Endothelial cell of umbilical vein (primary cell): ENCODE measurements at regions of chr1 and their contacts with region 1.

Region 1: GRCh38 chr1:47725992-47726855 is 271.0 kb downstream of the TRABD2B start:
- DNase-seq: peak; percentile 74
- H3K4me3 ChIP-seq: no peak overlapping the region
- H3K27ac ChIP-seq: no peak overlapping the region
- H3K4me1 ChIP-seq: no peaks in the 10 kb centered on the region
- H3K27me3 ChIP-seq: peaks cover 34 to 37% of the 10 kb centered on the region in 2 experiments
- CTCF ChIP-seq: peak; percentile 83 to 95
- POLR2A ChIP-seq: no peak

Region 2: DNA sequence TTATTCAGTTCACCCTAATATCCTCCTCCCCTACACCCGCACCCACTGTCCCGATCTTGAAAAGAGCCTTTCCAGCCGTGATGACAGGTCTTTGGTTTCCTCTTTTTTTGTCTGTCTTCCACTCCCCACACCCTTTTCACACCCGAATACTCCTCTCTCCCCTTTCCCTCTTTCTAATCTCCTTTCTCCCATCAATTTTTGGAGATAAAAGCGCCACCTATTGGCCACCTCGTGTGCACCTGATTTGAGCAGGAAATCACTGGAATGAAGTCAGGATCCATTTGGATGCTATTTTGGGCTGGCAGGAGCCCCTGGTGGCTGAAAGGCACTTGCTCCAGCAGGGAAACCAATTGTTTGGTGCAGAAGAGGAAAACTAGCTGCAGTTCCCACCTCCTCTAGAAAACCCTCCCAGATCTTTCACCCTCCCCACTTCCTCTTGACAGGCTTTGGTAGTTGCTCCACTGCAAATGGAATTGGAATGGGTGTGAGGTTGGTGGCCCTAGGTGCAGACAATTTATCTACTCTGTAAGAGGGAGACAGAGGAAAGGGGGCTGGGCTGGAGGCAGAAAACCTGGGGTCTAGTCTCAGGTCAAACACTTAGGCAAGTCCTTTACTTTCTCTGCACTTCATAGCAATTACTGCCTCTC is 301.8 kb before region 1 on chr1:
- CTCF ChIA-PET with region 1: interaction called, 691 read pairs
- POLR2A ChIA-PET with region 1: no interaction called
- dilution Hi-C with region 1: no loop called
- intact Hi-C with region 1: no loop called
- DNase-seq: peak; percentile 29
- H3K4me3 ChIP-seq: no peak overlapping the region
- H3K27ac ChIP-seq: no peak overlapping the region
- H3K4me1 ChIP-seq: no peaks in the 10 kb centered on the region
- H3K27me3 ChIP-seq: peaks cover 7 to 13% of the 10 kb centered on the region in 2 experiments
- CTCF ChIP-seq: peak; percentile 72 to 83
- POLR2A ChIP-seq: no peak

Region 3: DNA sequence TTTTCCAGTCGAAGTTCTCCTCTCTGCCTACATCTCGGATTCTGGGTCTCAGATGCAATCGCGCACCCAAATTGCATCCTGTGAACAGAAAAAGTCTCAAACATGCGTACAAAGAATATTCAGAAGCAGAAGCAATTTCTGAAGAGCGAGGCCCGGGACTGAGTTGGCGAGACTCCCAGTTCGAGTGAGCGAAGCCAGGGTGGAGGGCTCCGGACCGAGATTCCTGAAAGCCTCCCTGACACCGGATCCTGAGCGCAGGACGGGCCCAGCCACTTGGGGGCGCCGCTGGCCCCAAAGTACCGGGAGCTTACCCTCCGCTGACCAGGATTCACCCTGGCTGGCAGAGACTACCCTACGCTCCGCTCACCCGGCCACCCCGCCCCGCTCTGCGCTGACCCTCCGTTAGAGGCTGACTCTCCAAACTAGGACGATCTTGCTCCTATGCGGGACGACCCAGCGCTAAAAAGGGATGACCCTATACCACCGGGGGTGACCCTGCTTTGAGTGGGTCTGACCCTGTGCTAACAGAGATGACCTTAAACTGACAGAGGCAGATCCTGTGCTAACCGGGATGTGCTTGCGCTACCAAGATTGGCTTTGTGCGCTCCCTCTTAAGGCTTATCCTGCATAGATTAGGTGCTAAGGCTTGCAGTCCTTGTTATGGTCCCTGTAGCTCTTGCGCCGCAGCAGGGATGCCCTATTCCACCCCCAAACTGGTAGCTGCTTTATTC is 276.2 kb before region 1 on chr1:
- CTCF ChIA-PET with region 1: interaction called, 59 read pairs
- POLR2A ChIA-PET with region 1: no interaction called
- dilution Hi-C with region 1: no loop called
- intact Hi-C with region 1: no loop called
- DNase-seq: no peak
- H3K4me3 ChIP-seq: no peak overlapping the region
- H3K27ac ChIP-seq: no peak overlapping the region
- H3K4me1 ChIP-seq: no peaks in the 10 kb centered on the region
- H3K27me3 ChIP-seq: peaks cover 62 to 66% of the 10 kb centered on the region in 2 experiments
- CTCF ChIP-seq: peak; percentile 41 to 69
- POLR2A ChIP-seq: no peak

Region 4: DNA sequence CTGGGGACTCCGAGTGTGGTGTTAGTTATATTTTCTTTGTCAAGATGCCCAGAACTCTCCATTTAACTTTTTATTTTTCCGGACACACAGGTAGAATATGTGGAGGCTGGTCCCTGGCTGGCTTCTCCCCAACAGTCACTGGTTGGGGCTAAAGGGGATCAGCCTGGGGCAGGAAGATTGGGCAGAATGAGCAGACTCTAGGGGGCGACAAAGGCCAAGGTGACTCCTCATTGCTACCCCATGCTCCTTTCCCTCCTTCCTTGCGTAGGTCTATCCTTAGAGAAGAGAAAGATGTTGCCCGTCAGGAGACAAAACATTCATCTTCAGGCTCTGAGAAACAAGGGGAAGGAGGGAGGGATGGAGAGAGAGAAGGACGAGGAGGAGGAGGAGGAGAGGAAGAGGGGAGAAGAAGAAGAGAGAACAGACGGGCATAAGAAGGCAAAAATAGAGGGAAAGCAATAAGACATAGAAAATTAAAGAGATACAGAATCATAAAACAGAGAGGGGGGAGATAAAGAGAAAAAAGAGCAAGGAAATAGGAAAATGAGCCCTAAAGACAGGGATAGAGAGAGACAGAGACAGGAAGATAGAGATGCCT is 198.5 kb before region 1 on chr1:
- CTCF ChIA-PET with region 1: interaction called, 171 read pairs
- POLR2A ChIA-PET with region 1: no interaction called
- dilution Hi-C with region 1: no loop called
- intact Hi-C with region 1: loop called (anchors 1 kb)
- DNase-seq: peak; percentile 28
- H3K4me3 ChIP-seq: no peak overlapping the region
- H3K27ac ChIP-seq: no peak overlapping the region
- H3K4me1 ChIP-seq: no peaks in the 10 kb centered on the region
- H3K27me3 ChIP-seq: peaks cover 11 to 20% of the 10 kb centered on the region in 2 experiments
- CTCF ChIP-seq: peak; percentile 38 to 61
- POLR2A ChIP-seq: no peak

Region 5: GRCh38 chr1:47710329-47711071 is 15.7 kb before region 1 on chr1:
- CTCF ChIA-PET with region 1: interaction called, 182 read pairs
- POLR2A ChIA-PET with region 1: no interaction called
- dilution Hi-C with region 1: no loop called
- intact Hi-C with region 1: no loop called
- DNase-seq: peak; percentile 56
- H3K4me3 ChIP-seq: no peak overlapping the region
- H3K27ac ChIP-seq: no peak overlapping the region
- H3K4me1 ChIP-seq: peaks cover 7% of the 10 kb centered on the region
- H3K27me3 ChIP-seq: peaks cover 59 to 66% of the 10 kb centered on the region in 2 experiments
- CTCF ChIP-seq: peak; percentile 98 to 99
- POLR2A ChIP-seq: no peak

Region 6: GRCh38 chr1:48061162-48062136 is 335.2 kb after region 1 on chr1:
- CTCF ChIA-PET with region 1: interaction called, 13 read pairs
- POLR2A ChIA-PET with region 1: no interaction called
- dilution Hi-C with region 1: no loop called
- intact Hi-C with region 1: no loop called
- DNase-seq: peak; percentile 61
- H3K4me3 ChIP-seq: no peak overlapping the region
- H3K27ac ChIP-seq: no peak overlapping the region
- H3K4me1 ChIP-seq: no peaks in the 10 kb centered on the region
- H3K27me3 ChIP-seq: no peaks in the 10 kb centered on the region
- CTCF ChIP-seq: peak; percentile 48 to 56
- POLR2A ChIP-seq: no peak